AG04450 (cell line): ENCODE measurements at regions of chr4 and their contacts with region 1.

Region 1: DNA sequence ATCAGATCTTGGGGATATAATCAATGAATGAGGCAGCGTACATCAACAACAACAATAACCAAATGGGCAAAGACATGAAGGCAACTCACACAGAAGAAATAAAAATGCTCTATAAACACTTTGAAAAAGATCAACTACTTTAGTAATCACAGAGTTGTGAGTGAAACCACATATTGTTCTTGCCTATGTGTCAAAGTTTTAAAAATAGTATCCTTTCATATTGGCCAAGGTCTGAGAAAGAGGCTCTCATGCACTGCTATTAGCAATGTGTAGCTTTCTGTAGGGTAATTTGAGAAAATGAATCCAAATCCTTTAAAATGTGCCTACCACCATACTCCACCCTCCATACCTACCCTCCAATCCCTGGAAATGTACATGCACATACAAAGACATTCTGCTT is 25.0 kb downstream of the COQ2 start:
- DNase-seq: no peak
- H3K4me3 ChIP-seq: no peak overlapping the region
- H3K27ac ChIP-seq: no peak overlapping the region
- H3K27me3 ChIP-seq: no peaks in the 10 kb centered on the region
- CTCF ChIP-seq: no peak

Region 2: DNA sequence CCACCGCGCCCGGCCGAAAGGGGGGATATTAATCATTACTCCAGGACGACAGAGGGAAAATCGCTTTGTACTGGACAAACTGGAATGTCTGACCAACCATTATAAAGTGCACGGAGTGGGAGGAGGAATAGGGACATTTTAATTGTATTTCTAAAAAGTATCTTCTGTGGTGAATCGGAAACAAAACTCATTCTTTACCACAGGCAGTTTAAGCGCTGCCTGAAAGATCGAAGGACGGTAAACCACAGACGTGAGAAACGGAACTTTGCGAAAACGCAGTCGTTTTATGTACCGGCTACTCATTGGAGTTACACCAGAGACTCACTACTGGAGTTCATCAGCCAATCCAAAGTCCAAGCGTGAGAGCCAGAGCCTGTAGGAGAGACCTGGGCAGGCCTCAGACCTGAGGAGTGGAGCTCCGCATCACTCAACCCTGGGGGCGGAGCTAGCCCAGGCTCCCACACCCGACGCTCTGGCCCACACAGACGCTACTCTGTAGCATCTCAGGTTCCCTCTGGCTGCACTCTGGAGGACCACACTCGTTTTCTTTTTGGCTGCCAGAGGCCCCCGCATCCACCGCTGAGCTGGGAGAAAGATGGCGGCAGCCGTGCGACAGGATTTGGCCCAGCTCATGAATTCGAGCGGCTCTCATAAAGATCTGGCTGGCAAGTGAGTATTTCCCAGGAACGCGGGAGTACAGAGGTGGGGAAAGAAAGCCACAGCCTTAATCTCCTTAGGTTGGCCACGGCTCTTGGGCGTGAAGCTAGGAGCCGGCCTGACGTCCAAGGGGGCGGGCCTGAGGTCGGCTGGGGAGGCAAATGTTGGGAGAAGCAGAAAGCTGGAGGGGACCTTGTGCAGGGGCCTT is 224.7 kb before region 1 on chr4 and contains the start of gene COPS4:
- CTCF ChIA-PET with region 1: interaction called, 12 read pairs
- POLR2A ChIA-PET with region 1: interaction called, 3 read pairs
- DNase-seq: peak; percentile 99
- H3K4me3 ChIP-seq: peak within 1 kb of the TSS; percentile 90
- H3K27ac ChIP-seq: peak within 1 kb of the TSS; percentile 92
- H3K27me3 ChIP-seq: peaks cover 6% of the 10 kb centered on the region
- CTCF ChIP-seq: peak; percentile 59
- polyA plus RNA-seq, gene COPS4: 59.0 and 78.4 TPM in 2 replicates

Region 3: DNA sequence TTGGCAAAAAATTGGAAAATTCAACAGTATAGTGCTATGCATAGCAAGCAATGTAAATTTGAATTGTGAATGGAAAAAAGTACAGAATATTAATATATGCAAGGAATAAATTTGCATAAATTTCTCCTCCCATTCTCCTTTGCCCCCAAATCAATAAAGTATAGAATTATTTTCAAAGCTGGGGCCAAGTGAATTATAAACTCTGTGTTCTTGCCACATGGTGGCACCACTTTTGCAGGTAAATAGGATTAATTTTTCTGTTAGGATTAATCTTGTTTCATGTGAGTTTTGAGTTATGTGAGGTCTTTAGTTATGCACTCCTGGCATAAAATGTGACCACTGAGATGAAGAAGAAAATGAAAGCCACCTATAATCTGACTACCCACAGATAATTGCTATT is 204.7 kb before region 1 on chr4:
- CTCF ChIA-PET with region 1: interaction called, 11 read pairs
- POLR2A ChIA-PET with region 1: no interaction called
- DNase-seq: no peak
- H3K4me3 ChIP-seq: no peak overlapping the region
- H3K27ac ChIP-seq: no peak overlapping the region
- H3K27me3 ChIP-seq: no peaks in the 10 kb centered on the region
- CTCF ChIP-seq: peak; percentile 41

Region 4: DNA sequence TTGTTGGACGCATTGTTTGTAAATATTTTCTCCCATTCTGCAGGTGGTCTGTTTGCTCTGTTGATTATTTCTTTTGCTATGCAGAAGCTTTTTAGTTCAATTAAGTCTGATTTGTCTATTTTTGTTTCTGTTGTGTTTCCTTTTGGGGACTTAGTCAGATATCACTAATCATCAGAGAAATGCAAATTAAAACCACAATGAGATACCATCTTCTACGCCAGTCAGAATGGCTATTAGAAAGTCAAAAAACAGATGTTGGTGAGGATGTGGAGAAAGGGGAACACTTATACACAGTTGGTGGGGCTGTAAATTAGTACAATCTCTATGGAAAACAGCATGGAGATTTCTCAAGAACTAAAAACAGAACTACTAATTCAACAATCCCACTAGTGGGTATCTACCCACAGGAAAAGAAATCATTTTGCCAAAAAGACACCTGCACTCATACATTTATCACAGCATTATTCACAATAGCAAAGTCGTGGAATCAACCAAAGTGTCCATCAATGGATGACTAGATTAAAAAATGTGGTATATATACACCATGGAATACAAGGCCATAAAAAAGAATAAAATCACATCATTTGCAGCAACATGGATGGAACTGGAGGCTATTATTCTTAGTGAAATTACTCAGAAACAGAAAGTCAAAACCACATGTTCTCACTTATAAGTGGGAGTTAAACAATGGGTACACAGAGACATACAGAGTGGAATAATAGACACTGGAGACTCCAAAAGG is 16.9 kb after region 1 on chr4:
- CTCF ChIA-PET with region 1: interaction called, 14 read pairs
- POLR2A ChIA-PET with region 1: no interaction called
- DNase-seq: no peak
- H3K4me3 ChIP-seq: no peak overlapping the region
- H3K27ac ChIP-seq: no peak overlapping the region
- H3K27me3 ChIP-seq: no peaks in the 10 kb centered on the region
- CTCF ChIP-seq: no peak